ENCODE measurements at regions of chr7 and their contacts with region 1.

Region 1: DNA sequence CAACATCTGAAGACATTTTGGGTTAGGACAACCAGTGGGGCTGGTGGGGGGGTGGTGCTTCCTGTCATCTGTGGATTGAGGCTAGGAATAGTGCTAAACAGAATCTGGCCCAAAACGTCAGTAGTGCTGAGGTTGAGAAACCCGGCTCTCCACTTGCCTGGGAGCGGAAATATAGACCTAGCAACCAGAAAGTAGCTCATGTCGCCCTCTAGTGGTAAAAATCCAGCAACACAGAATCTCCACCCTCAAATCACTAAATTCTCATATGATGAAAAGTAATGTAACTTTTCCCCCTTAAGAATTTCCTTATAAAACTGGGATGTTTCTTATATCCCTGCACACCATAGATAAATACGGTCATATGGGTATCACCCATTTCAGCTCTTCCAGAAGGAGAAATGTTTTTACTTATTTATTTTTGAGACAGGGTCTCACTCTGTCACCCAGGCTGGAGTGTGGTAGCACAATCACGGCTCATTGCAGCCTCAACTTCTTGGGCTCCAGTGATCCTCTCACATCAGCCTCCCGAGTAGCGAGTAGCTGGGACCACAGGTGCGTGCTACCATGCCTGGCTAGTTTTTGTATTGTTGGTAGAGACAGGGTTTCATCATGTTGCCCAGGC is 34.4 kb downstream of the ZC3HAV1 start:
- DNase-seq: peak; percentile 62
- H3K4me3 Mint-ChIP-seq: peak overlapping the region; percentile 15
- H3K27ac Mint-ChIP-seq: peak overlapping the region; percentile 77
- H3K4me1 Mint-ChIP-seq: peaks cover 61% of the 10 kb centered on the region
- H3K27me3 Mint-ChIP-seq: no peaks in the 10 kb centered on the region

Region 2: GRCh38 chr7:138575897-138576428 is 499.2 kb before region 1 on chr7:
- intact Hi-C with region 1: no loop called
- DNase-seq: no peak
- H3K4me3 Mint-ChIP-seq: no peak overlapping the region
- H3K27ac Mint-ChIP-seq: no peak overlapping the region
- H3K4me1 Mint-ChIP-seq: no peaks in the 10 kb centered on the region
- H3K27me3 Mint-ChIP-seq: no peaks in the 10 kb centered on the region

Region 3: GRCh38 chr7:138738551-138739335 is 336.4 kb before region 1 on chr7:
- intact Hi-C with region 1: no loop called
- DNase-seq: peak; percentile 72
- H3K4me3 Mint-ChIP-seq: no peak overlapping the region
- H3K27ac Mint-ChIP-seq: no peak overlapping the region
- H3K4me1 Mint-ChIP-seq: peaks cover 6% of the 10 kb centered on the region
- H3K27me3 Mint-ChIP-seq: no peaks in the 10 kb centered on the region

Region 4: GRCh38 chr7:139016931-139017511 is 58.1 kb before region 1 on chr7:
- intact Hi-C with region 1: loop called (anchors 1 kb)
- DNase-seq: peak; percentile 52
- H3K4me3 Mint-ChIP-seq: no peak overlapping the region
- H3K27ac Mint-ChIP-seq: no peak overlapping the region
- H3K4me1 Mint-ChIP-seq: peaks cover 7% of the 10 kb centered on the region
- H3K27me3 Mint-ChIP-seq: peaks cover 11% of the 10 kb centered on the region

Region 5: GRCh38 chr7:139035586-139036353 is 39.4 kb before region 1 on chr7 and contains the start of gene ZC3HAV1L:
- intact Hi-C with region 1: loop called (anchors 1 kb)
- DNase-seq: peak; percentile 48
- H3K4me3 Mint-ChIP-seq: peak within 1 kb of the TSS; percentile 91
- H3K27ac Mint-ChIP-seq: peak within 1 kb of the TSS; percentile 85
- H3K4me1 Mint-ChIP-seq: peaks cover 38% of the 10 kb centered on the region
- H3K27me3 Mint-ChIP-seq: no peaks in the 10 kb centered on the region
- total RNA-seq, gene ZC3HAV1L: 29.6 and 31.5 TPM in 2 replicates

Region 6: GRCh38 chr7:139095194-139095659 is 20.1 kb after region 1 on chr7:
- intact Hi-C with region 1: loop called (anchors 2 kb)
- DNase-seq: peak; percentile 86
- H3K4me3 Mint-ChIP-seq: peak overlapping the region; percentile 80
- H3K27ac Mint-ChIP-seq: peak overlapping the region; percentile 97
- H3K4me1 Mint-ChIP-seq: peaks cover 87% of the 10 kb centered on the region
- H3K27me3 Mint-ChIP-seq: no peaks in the 10 kb centered on the region

Region 7: DNA sequence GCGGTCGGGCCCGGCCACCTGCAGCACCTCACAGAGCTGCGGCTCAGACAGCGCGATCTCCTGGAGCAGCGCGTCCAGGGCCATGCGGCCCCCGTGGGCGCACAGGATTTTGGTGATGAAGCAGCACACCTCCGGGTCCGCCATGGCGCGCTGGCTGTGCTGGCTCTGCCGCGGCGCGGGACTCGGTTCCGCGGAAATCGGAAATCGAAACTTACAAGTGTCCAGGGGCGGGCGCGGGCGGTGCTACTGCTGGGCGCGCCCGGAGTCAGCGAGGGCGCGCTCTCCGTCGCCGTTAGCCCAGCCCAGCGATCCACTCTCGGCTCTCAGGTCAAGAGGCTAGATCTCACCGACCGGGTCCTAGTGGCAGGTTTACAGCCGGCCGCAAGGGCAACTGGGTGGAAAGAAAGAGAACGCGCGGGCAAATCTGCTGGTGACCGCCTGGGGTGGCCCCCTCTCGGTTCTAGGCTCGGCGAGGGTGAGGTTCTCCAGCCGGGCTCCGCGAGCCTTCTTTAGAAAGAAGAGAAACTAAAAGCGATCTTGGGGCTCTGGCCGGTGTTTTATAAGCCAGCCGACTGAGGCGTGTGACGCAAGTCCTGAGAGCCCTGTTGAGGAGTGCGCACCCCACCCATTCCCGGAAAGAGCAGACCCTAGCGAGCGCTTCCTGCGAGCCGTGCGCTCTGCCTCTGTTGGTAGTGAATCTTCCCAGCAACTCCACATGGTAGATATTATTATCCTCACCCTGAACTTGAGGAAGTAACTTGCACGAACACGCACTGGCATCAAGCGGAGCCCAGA is 34.2 kb after region 1 on chr7 and contains the start of gene ZC3HAV1:
- intact Hi-C with region 1: loop called (anchors 2 kb)
- DNase-seq: peak; percentile 87
- H3K4me3 Mint-ChIP-seq: peak within 1 kb of the TSS; percentile 97
- H3K27ac Mint-ChIP-seq: peak within 1 kb of the TSS; percentile 98
- H3K4me1 Mint-ChIP-seq: peaks cover 38% of the 10 kb centered on the region
- H3K27me3 Mint-ChIP-seq: no peaks in the 10 kb centered on the region
- total RNA-seq, gene ZC3HAV1: 89.7 and 90.0 TPM in 2 replicates

Region 8: DNA sequence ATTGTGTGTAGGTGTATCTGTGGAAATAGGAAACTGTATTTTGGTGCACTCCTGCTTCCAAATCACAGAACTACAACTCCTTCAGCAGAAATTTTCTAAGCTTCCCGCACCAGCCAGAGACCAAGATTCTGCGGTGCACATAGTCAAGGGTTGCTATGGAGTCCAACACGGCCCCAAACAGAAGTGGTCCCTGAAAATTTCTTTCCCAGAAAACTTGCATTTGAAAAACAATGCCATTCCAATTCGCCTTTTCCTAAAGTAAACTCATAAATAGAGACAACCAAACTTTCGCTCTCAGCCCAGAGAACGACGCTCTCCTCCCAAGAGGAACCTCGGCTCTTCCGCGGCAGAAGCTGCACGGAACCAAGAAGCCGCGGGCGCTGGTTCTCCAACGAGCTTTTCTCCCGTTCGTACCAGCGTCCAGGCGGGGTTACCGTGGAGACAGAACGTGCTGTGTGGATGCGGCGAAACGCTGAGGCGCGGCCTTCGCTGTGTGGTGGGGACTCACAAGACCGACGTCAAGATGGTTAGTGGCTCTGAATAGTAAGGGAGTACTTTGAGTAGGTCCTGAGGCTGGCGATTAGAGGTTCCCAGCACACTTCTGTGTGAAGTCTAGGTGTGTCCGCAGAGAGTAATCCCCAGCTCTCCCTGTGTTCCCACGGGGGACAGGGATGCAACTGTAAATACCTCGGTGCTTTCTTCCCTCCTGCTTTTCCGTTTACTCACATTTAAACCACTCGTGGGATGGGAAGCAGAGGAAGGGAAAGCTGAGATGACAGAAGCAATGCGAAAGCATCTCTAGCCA is 58.4 kb after region 1 on chr7:
- intact Hi-C with region 1: no loop called
- DNase-seq: peak; percentile 81
- H3K4me3 Mint-ChIP-seq: peak overlapping the region; percentile 89
- H3K27ac Mint-ChIP-seq: peak overlapping the region; percentile 71
- H3K4me1 Mint-ChIP-seq: peaks cover 31% of the 10 kb centered on the region
- H3K27me3 Mint-ChIP-seq: peaks cover 2% of the 10 kb centered on the region

Measured in activated T-helper 1 cell treated with anti-CD3 and anti-CD28 coated beads, Interleukin-12 subunit alpha, Interleukin-12 subunit beta, Interleukin-2, Interleukin-4 antibody, amounts not matched to agents 30 ng/mL and 10 ng/mL and 1 ng/mL, durations not matched to agents 14 hours and 24 hours and 36 hours (primary cell).